Activated B cell treated with CpG ODN at 0.5 μM for 24 hours (primary cell): ENCODE measurements at regions of chr22 and their contacts with region 1.

Region 1: GRCh38 chr22:25362215-25362882 is 142.9 kb downstream of the CRYBB2 start:
- DNase-seq: peak; percentile 67
- ATAC-seq: peak; percentile 68
- H3K4me3 Mint-ChIP-seq: no peak overlapping the region
- H3K27ac Mint-ChIP-seq: no peak overlapping the region
- H3K4me1 Mint-ChIP-seq: peaks cover 2% of the 10 kb centered on the region
- H3K27me3 Mint-ChIP-seq: no peaks in the 10 kb centered on the region
- CTCF ChIP-seq: peak; percentile 48

Region 2: DNA sequence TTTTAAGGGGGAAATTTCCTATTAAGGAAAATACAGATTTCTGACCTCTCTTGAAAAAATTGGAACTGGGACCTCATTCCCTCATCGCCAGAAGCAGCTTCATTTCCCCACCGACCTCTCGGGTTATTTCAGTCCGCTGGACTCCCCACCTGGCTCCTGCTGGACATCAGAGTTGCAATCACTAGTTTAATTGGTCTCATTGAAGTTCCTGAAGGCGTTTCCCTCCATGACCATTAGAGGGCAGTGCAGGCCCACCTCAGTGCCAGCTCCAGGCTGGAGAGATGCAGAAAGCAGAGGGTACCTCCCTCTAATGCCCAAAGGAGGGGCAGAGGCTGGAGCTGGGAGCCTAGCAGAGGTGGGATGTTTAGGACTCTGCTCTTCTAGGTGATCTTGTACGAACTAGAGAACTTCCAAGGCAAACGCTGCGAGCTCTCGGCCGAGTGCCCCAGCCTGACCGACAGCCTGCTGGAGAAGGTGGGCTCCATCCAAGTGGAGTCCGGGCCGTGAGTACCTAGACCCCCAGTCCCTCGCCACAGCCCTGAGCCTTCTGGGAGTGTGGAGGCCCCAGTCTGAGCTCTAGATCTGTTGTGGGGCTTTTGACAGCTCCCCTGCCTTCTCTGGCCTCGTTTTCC is 159.9 kb before region 1 on chr22:
- CTCF ChIA-PET with region 1: no interaction called
- POLR2A ChIA-PET with region 1: no interaction called
- intact Hi-C with region 1: loop called (anchors 1 kb)
- DNase-seq: peak; percentile 26
- ATAC-seq: peak; percentile 47
- H3K4me3 Mint-ChIP-seq: no peak overlapping the region
- H3K27ac Mint-ChIP-seq: no peak overlapping the region
- H3K4me1 Mint-ChIP-seq: no peaks in the 10 kb centered on the region
- H3K27me3 Mint-ChIP-seq: peaks cover 4% of the 10 kb centered on the region
- CTCF ChIP-seq: peak; percentile 56

Region 3: GRCh38 chr22:25404928-25405816 is 42.8 kb after region 1 on chr22:
- CTCF ChIA-PET with region 1: no interaction called
- POLR2A ChIA-PET with region 1: no interaction called
- intact Hi-C with region 1: loop called (anchors 1 kb)
- DNase-seq: peak; percentile 73
- ATAC-seq: peak; percentile 87
- H3K4me3 Mint-ChIP-seq: peak overlapping the region; percentile 73
- H3K27ac Mint-ChIP-seq: no peak overlapping the region
- H3K4me1 Mint-ChIP-seq: peaks cover 43% of the 10 kb centered on the region
- H3K27me3 Mint-ChIP-seq: no peaks in the 10 kb centered on the region
- CTCF ChIP-seq: no peak

Region 4: GRCh38 chr22:25598609-25599008 is 236.3 kb after region 1 on chr22:
- CTCF ChIA-PET with region 1: no interaction called
- POLR2A ChIA-PET with region 1: no interaction called
- intact Hi-C with region 1: no loop called
- DNase-seq: no peak
- ATAC-seq: no peak
- H3K4me3 Mint-ChIP-seq: no peak overlapping the region
- H3K27ac Mint-ChIP-seq: no peak overlapping the region
- H3K4me1 Mint-ChIP-seq: peaks cover 65% of the 10 kb centered on the region
- H3K27me3 Mint-ChIP-seq: no peaks in the 10 kb centered on the region
- CTCF ChIP-seq: no peak

Region 5: DNA sequence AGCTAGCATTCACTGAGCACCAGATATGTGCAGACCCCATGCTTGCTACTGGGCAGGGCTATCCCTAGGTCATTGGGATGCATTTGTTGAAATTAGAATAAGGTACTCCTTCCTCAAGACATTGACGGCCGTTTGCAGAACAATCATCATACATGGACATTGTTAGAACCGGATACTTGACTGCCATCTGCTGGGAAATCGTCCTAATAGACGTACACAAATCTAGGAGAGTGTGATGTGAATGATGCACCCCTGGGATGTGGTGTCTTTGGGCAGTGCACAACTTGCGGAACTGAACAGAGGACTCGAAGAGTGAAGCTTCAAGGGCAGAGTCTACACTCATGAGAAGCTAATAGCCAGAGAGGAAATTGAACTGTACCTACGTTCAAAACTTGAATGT is 415.5 kb after region 1 on chr22:
- CTCF ChIA-PET with region 1: no interaction called
- POLR2A ChIA-PET with region 1: no interaction called
- intact Hi-C with region 1: loop called (anchors 1 kb)
- DNase-seq: no peak
- ATAC-seq: no peak
- H3K4me3 Mint-ChIP-seq: no peak overlapping the region
- H3K27ac Mint-ChIP-seq: no peak overlapping the region
- H3K4me1 Mint-ChIP-seq: peaks cover 3% of the 10 kb centered on the region
- H3K27me3 Mint-ChIP-seq: peaks cover 6% of the 10 kb centered on the region
- CTCF ChIP-seq: no peak